ENCODE measurements at regions of chr10 and their contacts with region 1.

Region 1: GRCh38 chr10:122380703-122381102 is 6.2 kb downstream of the PLEKHA1 start:
- DNase-seq: no peak
- H3K4me3 ChIP-seq: no peak overlapping the region
- H3K27ac ChIP-seq: no peak overlapping the region
- H3K4me1 ChIP-seq: peaks cover 7 to 17% of the 10 kb centered on the region in 2 donors
- H3K27me3 ChIP-seq: no peaks in the 10 kb centered on the region
- CTCF ChIP-seq: no peak
- POLR2A ChIP-seq: no peak

Region 2: DNA sequence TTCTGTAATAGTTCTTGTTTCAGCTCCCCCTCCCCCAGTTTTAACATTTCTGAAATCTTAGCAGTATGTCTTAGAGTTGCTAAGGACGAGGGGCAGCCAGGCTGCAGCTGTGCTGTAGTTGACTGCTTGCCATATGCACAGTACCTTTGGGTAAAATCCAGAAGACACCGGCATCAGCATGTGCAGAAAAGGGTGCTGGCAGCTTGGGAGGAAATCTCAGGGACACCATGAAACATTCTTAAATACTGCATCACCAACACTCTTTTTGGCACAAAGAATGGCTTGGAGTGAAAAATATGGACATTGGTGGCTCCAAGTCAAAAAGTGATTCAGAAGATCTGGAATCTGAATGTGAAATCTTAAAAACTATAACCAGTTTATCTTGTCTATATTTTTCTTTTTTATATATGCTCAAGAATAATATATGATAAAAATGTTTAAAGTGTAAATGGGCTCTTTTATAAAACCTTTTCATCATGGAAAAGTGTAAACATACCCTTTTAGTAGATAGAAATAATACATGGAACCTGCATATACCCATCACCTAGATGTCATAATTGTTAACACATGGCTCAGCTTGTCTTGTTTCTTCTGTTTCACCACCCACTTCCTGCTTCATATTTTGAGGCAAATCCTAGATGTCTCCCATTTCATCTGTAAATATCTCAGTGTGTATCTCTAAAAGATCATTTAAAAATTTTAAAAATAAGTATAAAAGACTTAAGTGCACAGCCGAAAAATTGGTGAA is 39.3 kb after region 1 on chr10:
- intact Hi-C with region 1: loop called (anchors 5 kb)
- DNase-seq: no peak
- H3K4me3 ChIP-seq: no peak overlapping the region
- H3K27ac ChIP-seq: no peak overlapping the region
- H3K4me1 ChIP-seq: no peaks in the 10 kb centered on the region
- H3K27me3 ChIP-seq: no peaks in the 10 kb centered on the region
- CTCF ChIP-seq: no peak
- POLR2A ChIP-seq: no peak

Region 3: GRCh38 chr10:122557516-122557915 is 176.8 kb after region 1 on chr10:
- intact Hi-C with region 1: no loop called
- DNase-seq: no peak
- H3K4me3 ChIP-seq: no peak overlapping the region
- H3K27ac ChIP-seq: no peak overlapping the region
- H3K4me1 ChIP-seq: peaks cover 14 to 23% of the 10 kb centered on the region in 2 donors
- H3K27me3 ChIP-seq: no peaks in the 10 kb centered on the region
- CTCF ChIP-seq: no peak
- POLR2A ChIP-seq: no peak